ENCODE measurements at regions of chr20 and their contacts with region 1.

Region 1: GRCh38 chr20:32945710-32946221 is 58.5 kb downstream of the SUN5 start:
- DNase-seq: peak; percentile 32
- H3K4me3 Mint-ChIP-seq: peak overlapping the region; percentile 14
- H3K27ac Mint-ChIP-seq: peak overlapping the region; percentile 86
- H3K4me1 Mint-ChIP-seq: peaks cover 39% of the 10 kb centered on the region
- H3K27me3 Mint-ChIP-seq: no peaks in the 10 kb centered on the region

Region 2: DNA sequence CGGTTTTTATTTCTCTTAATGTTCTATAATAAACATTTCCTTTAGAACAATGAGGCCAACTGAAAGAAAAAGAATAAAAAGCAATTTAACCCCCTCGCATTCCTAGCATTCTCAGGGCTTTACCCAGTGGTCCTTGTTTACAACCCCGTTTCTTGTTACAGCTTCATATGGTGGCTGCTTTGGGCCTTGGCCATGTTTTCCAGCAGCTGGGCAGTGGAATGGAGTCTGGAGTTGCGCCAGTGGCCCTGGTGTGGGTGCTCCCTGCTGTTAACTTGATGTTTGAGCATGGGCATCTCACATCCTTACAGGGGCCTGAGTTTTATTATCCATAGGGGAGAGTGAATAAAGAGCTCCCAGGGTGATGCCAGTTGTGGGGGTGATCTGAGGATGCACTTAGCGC is 68.3 kb before region 1 on chr20:
- CTCF ChIA-PET with region 1: no interaction called
- POLR2A ChIA-PET with region 1: no interaction called
- intact Hi-C with region 1: no loop called
- DNase-seq: no peak
- H3K4me3 Mint-ChIP-seq: no peak overlapping the region
- H3K27ac Mint-ChIP-seq: no peak overlapping the region
- H3K4me1 Mint-ChIP-seq: no peaks in the 10 kb centered on the region
- H3K27me3 Mint-ChIP-seq: no peaks in the 10 kb centered on the region

Region 3: GRCh38 chr20:32959351-32960221 is 13.8 kb after region 1 on chr20:
- CTCF ChIA-PET with region 1: interaction called, 11 read pairs
- POLR2A ChIA-PET with region 1: no interaction called
- intact Hi-C with region 1: no loop called
- DNase-seq: no peak
- H3K4me3 Mint-ChIP-seq: no peak overlapping the region
- H3K27ac Mint-ChIP-seq: no peak overlapping the region
- H3K4me1 Mint-ChIP-seq: peaks cover 15% of the 10 kb centered on the region
- H3K27me3 Mint-ChIP-seq: no peaks in the 10 kb centered on the region

Region 4: GRCh38 chr20:32966881-32967781 is 21.4 kb after region 1 on chr20:
- CTCF ChIA-PET with region 1: interaction called, 19 read pairs
- POLR2A ChIA-PET with region 1: interaction called, 8 read pairs
- intact Hi-C with region 1: loop called (anchors 1 kb)
- DNase-seq: peak; percentile 84
- H3K4me3 Mint-ChIP-seq: peak overlapping the region; percentile 50
- H3K27ac Mint-ChIP-seq: no peak overlapping the region
- H3K4me1 Mint-ChIP-seq: peaks cover 72% of the 10 kb centered on the region
- H3K27me3 Mint-ChIP-seq: no peaks in the 10 kb centered on the region

Region 5: DNA sequence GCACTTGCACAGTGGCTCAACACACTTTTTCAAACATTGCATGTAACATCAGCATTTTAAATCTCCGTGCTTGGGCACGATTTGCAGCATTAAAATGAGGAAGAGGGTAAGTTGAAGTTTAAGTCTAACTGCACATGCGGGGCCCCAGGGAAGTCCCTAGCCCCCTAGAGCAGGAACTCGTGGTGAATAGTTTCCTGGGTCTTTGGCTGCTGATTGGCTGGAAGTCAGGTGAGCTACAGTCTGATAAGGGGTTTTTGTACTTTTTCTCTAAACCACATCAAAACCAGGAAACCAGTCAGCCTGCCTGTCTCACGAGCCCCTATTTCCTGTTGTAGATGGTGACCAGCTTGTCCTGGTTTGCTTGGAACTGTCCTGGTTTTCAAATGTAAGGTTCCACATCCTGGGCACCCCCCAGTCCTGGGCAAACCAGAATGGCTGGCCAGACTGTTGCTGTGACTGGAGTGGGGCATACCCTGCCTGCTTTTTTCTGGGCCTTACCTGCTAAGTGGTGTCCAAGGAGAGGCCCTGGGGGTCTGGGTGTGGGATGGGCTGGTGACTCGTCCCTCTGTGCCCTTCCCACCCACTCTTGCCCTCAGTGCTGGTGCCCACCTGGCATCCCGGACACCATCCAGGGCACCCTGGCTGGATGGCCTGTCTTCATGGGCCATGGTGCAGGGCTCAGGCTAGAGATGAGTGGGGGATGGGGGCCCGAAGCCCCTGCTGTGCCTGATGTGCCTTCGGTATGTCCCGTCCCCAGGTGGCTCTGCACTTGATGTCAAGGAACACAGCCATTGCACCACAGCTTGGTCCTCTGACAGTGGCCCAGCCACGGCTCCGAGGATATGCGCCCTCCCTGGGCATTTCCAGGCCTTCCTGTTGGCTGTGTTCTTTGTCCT is 26.7 kb after region 1 on chr20:
- CTCF ChIA-PET with region 1: interaction called, 19 read pairs
- POLR2A ChIA-PET with region 1: interaction called, 8 read pairs
- intact Hi-C with region 1: loop called (anchors 1 kb)
- DNase-seq: peak; percentile 91
- H3K4me3 Mint-ChIP-seq: no peak overlapping the region
- H3K27ac Mint-ChIP-seq: no peak overlapping the region
- H3K4me1 Mint-ChIP-seq: peaks cover 73% of the 10 kb centered on the region
- H3K27me3 Mint-ChIP-seq: no peaks in the 10 kb centered on the region

Region 6: DNA sequence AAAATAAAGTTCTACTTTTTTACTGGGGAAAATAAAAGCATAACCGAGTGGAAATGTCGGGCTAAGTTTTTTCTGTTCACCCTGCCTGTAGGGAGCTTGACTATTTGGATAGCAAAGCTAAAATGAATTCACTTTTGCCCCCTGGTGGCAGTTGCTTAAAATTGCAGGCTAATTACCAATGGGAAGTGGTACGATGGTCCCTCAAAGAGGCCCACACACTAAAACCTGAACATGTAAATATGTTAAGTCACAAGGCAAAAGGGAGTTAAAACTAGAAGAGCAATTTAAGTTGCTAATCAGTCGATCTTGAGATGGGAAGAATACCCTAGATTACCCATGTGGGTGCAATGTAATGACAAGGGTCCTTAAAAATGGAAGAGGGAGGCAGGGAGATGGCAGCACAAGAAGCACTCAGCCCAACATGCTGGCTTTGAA is 59.4 kb after region 1 on chr20:
- CTCF ChIA-PET with region 1: interaction called, 37 read pairs
- POLR2A ChIA-PET with region 1: interaction called, 3 read pairs
- intact Hi-C with region 1: loop called (anchors 1 kb)
- DNase-seq: peak; percentile 25
- H3K4me3 Mint-ChIP-seq: no peak overlapping the region
- H3K27ac Mint-ChIP-seq: no peak overlapping the region
- H3K4me1 Mint-ChIP-seq: peaks cover 10% of the 10 kb centered on the region
- H3K27me3 Mint-ChIP-seq: no peaks in the 10 kb centered on the region

Measured in activated CD4-positive, alpha-beta memory T cell treated with anti-CD3 and anti-CD28 coated beads for 36 hours (primary cell).